ENCODE measurements at regions of chr17 and their contacts with region 1.

Region 1: DNA sequence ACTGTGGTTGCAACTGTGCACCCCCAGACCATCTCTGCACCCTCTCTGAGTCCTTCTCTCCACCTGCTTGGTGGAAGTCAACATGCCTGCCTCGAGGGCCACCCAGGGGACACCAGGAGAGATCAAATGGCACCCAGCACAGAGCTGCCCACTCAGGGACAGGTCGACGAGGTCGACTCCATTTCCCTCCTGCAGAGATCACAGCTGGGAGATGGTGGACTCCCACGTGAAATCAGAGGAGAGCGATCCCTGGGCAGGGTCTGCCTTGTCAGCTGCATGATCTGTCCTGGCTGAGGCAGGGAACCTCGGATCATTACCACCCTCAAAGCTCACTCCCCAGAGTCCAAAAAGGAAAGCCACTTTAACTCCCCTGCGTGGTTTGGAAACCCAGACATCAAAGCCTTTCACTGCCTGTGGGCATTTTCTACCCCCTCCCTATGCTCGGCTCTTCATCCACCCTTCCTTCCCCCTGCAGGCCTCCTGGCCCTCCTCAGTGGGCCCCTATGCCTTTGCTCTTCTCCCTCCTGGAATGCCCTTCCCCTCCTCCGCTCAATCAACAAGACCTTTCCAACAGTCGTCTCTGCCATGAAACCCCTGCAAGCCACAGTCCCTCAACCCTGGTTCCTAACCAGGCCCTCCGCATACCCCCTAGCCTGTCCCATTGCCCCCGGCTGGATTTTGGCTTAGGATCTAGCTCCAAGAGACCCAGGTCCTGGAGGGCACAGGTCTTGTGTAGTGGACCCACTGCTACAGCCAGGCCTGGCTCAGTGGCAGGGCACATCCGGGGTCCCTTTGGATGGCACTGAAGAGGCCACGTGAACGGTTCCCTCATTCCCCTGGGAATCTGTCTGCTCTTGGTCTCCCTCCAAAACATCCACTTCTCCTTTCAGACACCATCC is 103.8 kb upstream of the RPL38 start:
- DNase-seq: no peak
- H3K4me3 ChIP-seq: no peak overlapping the region
- H3K27ac ChIP-seq: no peak overlapping the region
- H3K4me1 ChIP-seq: no peaks in the 10 kb centered on the region
- H3K27me3 ChIP-seq: peaks cover 0 to 23% (median 0%) of the 10 kb centered on the region in 3 donors
- CTCF ChIP-seq: no peak
- EP300 ChIP-seq: no peak
- POLR2A ChIP-seq: no peak

Region 2: DNA sequence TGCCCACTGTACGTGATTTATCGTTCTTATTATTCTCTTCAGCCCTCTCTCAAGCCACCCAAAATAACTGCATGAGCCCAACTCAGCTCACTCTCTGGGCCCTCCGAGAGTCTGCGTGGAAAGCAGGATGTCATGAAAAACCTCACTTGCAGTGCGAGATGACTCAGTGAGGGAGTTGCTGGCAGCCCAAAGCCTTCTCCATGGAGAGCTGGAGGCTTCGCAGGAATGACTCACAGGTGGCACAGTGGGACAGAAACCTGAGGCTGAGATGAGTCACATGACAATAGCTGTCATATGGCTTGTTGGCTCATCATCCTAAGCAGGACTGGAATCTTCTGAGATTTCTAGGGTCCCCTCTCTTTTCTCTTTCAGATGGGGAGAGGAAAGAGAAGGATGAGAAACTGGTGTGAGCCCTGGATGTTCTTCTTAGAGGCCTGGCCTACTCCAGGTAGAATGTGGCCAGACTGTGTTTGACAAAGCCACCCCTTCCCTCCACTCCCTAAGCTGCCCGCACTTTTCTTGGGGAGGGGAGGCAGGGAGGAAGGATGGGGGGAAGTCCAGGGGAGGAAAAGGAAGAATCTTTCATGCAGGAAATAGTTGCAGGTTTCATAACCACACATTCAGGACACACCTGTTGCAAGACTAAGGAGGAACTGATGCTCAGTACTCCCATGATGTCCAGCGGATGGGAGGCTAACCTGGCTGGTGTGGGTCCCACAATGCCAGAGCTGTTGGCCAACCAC is 56.8 kb before region 1 on chr17:
- intact Hi-C with region 1: loop called (anchors 10 kb)
- DNase-seq: peak; percentile 70
- H3K4me3 ChIP-seq: no peak overlapping the region
- H3K27ac ChIP-seq: no peak overlapping the region
- H3K4me1 ChIP-seq: peaks cover 0 to 6% (median 0%) of the 10 kb centered on the region in 4 donors
- H3K27me3 ChIP-seq: no peaks in the 10 kb centered on the region
- CTCF ChIP-seq: no peak
- EP300 ChIP-seq: no peak
- POLR2A ChIP-seq: no peak

Region 3: GRCh38 chr17:74325743-74326379 is 226.2 kb after region 1 on chr17 and contains the start of gene KIF19:
- intact Hi-C with region 1: no loop called
- DNase-seq: no peak
- H3K4me3 ChIP-seq: peak within 1 kb of the TSS in 3 of 4 donors; percentile 32 to 45 (median 42)
- H3K27ac ChIP-seq: no peak within 1 kb of the TSS
- H3K4me1 ChIP-seq: peaks cover 0 to 20% (median 15%) of the 10 kb centered on the region in 4 donors
- H3K27me3 ChIP-seq: peaks cover 11 to 49% (median 33%) of the 10 kb centered on the region in 3 donors
- CTCF ChIP-seq: no peak
- EP300 ChIP-seq: no peak
- POLR2A ChIP-seq: no peak
- total RNA-seq, gene KIF19: 0.36 to 1.7 (median 0.68) TPM in 3 of 4 donors, not detected in the other

Measured in sigmoid colon (tissue), 7 donors.